Psoas muscle (tissue), 8 donors: ENCODE measurements at regions of chrX and their contacts with region 1.

Region 1: GRCh38 chrX:40013266-40014195 is 84.2 kb downstream of the BCOR start:
- DNase-seq: peak; percentile 68 to 85
- ATAC-seq: peak; percentile 68 to 73 (median 72)
- H3K4me3 ChIP-seq: peak overlapping the region; percentile 72
- H3K27ac ChIP-seq: peak overlapping the region; percentile 92
- H3K4me1 ChIP-seq: peaks cover 6% of the 10 kb centered on the region
- H3K27me3 ChIP-seq: peaks cover 0 to 70% (median 0%) of the 10 kb centered on the region in 3 donors
- CTCF ChIP-seq: no peak

Region 2: DNA sequence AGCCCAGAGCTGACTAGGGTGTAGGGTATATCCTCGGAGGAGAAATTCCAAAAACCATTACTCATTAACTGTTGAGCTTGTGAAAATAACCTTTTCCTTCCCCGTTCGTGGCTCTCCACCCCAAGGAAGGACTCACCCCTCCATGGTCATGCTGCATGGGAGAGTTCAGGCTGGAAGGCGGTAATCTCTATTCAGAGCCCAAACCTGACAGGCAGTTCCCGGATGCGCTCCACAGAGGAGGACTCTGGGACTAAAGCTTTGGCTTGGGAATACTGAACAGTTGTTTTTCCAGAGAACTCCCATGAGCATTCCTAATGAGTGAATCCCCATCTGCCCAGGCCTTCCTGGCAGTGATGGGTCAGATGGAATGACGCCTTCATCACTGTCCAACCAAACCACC is 41.2 kb before region 1 on chrX:
- intact Hi-C with region 1: no loop called
- DNase-seq: no peak
- ATAC-seq: no peak
- H3K4me3 ChIP-seq: no peak overlapping the region
- H3K27ac ChIP-seq: no peak overlapping the region
- H3K4me1 ChIP-seq: no peaks in the 10 kb centered on the region
- H3K27me3 ChIP-seq: no peaks in the 10 kb centered on the region
- CTCF ChIP-seq: no peak

Region 3: DNA sequence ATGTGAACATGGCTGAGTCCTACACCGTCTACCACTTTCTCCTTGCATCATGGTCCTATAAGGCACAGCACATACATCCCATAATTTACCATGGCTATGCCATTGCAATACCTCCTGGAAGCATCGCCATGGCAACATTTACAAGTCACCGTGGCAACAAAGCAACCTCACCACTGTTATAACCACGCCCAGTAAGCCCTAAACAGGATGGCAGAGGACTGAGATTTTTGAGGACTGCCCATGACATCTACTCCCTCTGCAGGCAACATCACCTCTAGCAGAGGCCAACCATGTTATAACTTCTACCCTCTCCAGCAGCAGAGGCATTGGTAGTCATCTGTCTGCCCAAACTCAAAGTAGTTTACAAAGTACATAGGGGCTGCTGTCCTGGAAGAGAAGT is 54.5 kb after region 1 on chrX:
- intact Hi-C with region 1: loop called in 1 of 2 experiments (anchors 5 kb)
- DNase-seq: no peak
- ATAC-seq: no peak
- H3K4me3 ChIP-seq: no peak overlapping the region
- H3K27ac ChIP-seq: no peak overlapping the region
- H3K4me1 ChIP-seq: peaks cover 4% of the 10 kb centered on the region
- H3K27me3 ChIP-seq: no peaks in the 10 kb centered on the region
- CTCF ChIP-seq: no peak

Region 4: GRCh38 chrX:40097497-40098263 is 84.1 kb after region 1 on chrX and contains the start of gene BCOR:
- intact Hi-C with region 1: loop called in 1 of 2 experiments (anchors 1 kb)
- DNase-seq: peak; percentile 75 to 89
- ATAC-seq: peak; percentile 62 to 64 (median 63)
- H3K4me3 ChIP-seq: peak within 1 kb of the TSS; percentile 78
- H3K27ac ChIP-seq: peak within 1 kb of the TSS; percentile 91
- H3K4me1 ChIP-seq: peaks cover 10% of the 10 kb centered on the region
- H3K27me3 ChIP-seq: peaks cover 0 to 88% (median 0%) of the 10 kb centered on the region in 3 donors
- CTCF ChIP-seq: peak; percentile 5
- total RNA-seq, gene BCOR: 18.3 to 24.3 (median 19.6) TPM